Prostate gland (tissue), 2 donors: ENCODE measurements at regions of chr3 and their contacts with region 1.

Region 1: GRCh38 chr3:108090701-108091451 is at the start of gene CD47:
- DNase-seq: peak; percentile 95
- H3K4me3 ChIP-seq: peak within 1 kb of the TSS; percentile 97 to 99
- H3K27ac ChIP-seq: peak within 1 kb of the TSS; percentile 91 to 95
- H3K4me1 ChIP-seq: no peaks in the 10 kb centered on the region
- H3K27me3 ChIP-seq: no peaks in the 10 kb centered on the region
- CTCF ChIP-seq: no peak
- POLR2A ChIP-seq: peak; percentile 92
- total RNA-seq, gene CD47: 90.1 to 197 TPM

Region 2: DNA sequence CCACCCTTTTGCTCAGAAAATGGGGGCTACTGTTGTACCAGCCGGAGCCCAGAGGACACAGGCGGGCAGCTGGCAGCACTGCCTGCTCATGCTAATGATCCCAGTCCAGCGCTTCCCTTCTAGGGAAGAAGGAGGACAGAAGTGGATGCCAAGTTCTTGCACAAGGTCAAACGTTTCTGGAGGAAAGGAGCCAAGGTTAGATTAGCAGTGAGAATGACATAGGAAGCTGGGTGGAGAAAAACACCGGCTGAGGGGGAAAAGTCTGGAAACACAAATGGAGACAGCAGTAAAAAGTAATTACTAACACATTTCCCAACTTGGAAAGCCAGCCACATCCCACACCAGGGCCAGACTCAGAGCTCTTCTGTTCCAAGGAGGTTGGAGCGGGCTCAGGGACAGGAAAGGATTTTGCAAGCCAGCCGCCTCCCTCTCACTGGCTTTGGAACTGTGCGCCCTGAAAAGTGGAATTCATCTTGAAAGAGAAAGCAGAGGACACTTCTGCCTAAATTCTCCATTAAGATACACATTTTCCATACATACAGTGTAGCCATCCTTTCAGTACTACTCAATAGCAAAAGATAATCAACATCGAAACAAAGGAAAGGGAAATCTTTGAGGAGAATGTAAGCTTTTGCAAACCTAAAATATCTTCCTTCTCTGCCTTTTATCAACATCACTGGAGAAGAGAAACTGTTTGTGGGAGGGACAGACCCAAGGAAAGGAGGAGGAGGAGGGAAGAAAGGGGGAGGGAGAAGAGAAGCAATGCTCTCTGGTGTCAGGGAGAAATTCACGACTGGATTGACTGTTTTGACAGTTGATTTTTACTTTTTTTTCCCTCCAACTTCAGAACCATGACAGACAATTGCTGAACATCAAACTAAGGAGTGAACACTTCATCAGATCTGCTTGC is 133.6 kb before region 1 on chr3:
- intact Hi-C with region 1: loop called (anchors 2 kb)
- DNase-seq: peak; percentile 21
- H3K4me3 ChIP-seq: no peak overlapping the region
- H3K27ac ChIP-seq: peak overlapping the region; percentile 32 to 42
- H3K4me1 ChIP-seq: no peaks in the 10 kb centered on the region
- H3K27me3 ChIP-seq: no peaks in the 10 kb centered on the region
- CTCF ChIP-seq: no peak
- POLR2A ChIP-seq: no peak

Region 3: DNA sequence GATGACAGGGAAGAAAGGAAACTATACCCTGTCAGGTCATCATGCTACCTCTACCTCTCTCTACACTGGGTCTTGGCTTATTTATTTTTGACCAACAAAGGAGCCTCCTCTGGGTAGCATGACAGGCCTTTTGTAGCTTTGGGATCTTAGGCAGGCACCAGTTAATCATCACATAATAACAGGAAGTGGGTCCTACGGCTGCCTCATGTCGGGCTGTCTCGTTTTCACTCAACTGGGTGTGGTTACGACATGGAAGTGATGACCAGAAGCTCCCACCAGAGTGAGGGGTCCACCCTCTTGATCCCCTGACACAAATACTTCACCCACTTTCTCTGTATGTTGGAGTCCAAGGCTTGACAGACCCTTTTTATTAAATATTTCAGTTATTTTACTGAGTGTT is 105.4 kb before region 1 on chr3:
- intact Hi-C with region 1: no loop called
- DNase-seq: no peak
- H3K4me3 ChIP-seq: no peak overlapping the region
- H3K27ac ChIP-seq: no peak overlapping the region
- H3K4me1 ChIP-seq: no peaks in the 10 kb centered on the region
- H3K27me3 ChIP-seq: no peaks in the 10 kb centered on the region
- CTCF ChIP-seq: no peak
- POLR2A ChIP-seq: no peak

Region 4: GRCh38 chr3:108221911-108222852 is 131.3 kb after region 1 on chr3 and contains the start of gene IFT57:
- intact Hi-C with region 1: loop called (anchors 5 kb)
- DNase-seq: peak; percentile 98
- H3K4me3 ChIP-seq: peak within 1 kb of the TSS; percentile 60 to 76
- H3K27ac ChIP-seq: peak within 1 kb of the TSS; percentile 82 to 84
- H3K4me1 ChIP-seq: peaks cover 8% of the 10 kb centered on the region
- H3K27me3 ChIP-seq: no peaks in the 10 kb centered on the region
- CTCF ChIP-seq: peak in 1 of 4 experiments; percentile 9
- POLR2A ChIP-seq: peak; percentile 78
- total RNA-seq, gene IFT57: 88.8 to 163 TPM

Region 5: DNA sequence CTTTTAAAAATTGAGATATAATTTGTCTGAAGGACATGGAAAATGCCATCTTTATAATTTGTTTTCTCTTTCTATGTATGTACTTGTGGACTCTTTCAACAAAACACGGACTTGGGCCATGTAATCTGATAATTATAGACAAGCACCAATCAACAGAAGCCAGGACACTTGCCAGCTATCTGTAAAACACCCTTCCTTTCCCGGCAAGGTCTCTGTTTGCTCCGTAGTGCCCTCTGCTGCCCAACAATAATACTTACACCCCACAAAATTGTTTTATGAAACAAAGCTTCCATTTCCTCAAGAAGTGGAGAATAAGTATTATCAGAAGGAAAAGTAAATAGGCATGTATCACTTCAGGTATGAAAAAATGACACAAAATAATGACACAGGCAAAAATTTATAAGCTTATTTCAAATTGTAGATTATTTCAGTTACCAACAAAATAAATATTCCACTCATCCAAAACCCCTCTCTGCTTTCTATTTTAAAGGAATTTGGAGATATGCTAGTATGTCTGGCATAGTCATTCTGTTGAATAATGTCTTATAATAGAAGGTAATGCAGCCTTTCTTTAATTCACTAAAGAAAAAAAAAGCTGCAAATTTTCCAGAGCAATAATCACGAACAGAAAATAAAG is 386.8 kb after region 1 on chr3:
- intact Hi-C with region 1: loop called (anchors 10 kb)
- DNase-seq: peak; percentile 40
- H3K4me3 ChIP-seq: no peak overlapping the region
- H3K27ac ChIP-seq: no peak overlapping the region
- H3K4me1 ChIP-seq: no peaks in the 10 kb centered on the region
- H3K27me3 ChIP-seq: no peaks in the 10 kb centered on the region
- CTCF ChIP-seq: peak; percentile 46 to 76 (median 70)
- POLR2A ChIP-seq: no peak